SK-N-SH (cell line): ENCODE measurements at regions of chr21 and their contacts with region 1.

Region 1: GRCh38 chr21:36113647-36114428 is 21.0 kb upstream of the CBR3 start:
- DNase-seq: no peak
- H3K4me3 ChIP-seq: no peak overlapping the region
- H3K27ac ChIP-seq: no peak overlapping the region
- H3K4me1 ChIP-seq: peaks cover 0 to 5% of the 10 kb centered on the region in 2 experiments; a peak in 1 of 4 replicates
- H3K27me3 ChIP-seq: no peaks in the 10 kb centered on the region
- CTCF ChIP-seq: no peak
- EP300 ChIP-seq: no peak
- RAD21 ChIP-seq: no peak

Region 2: DNA sequence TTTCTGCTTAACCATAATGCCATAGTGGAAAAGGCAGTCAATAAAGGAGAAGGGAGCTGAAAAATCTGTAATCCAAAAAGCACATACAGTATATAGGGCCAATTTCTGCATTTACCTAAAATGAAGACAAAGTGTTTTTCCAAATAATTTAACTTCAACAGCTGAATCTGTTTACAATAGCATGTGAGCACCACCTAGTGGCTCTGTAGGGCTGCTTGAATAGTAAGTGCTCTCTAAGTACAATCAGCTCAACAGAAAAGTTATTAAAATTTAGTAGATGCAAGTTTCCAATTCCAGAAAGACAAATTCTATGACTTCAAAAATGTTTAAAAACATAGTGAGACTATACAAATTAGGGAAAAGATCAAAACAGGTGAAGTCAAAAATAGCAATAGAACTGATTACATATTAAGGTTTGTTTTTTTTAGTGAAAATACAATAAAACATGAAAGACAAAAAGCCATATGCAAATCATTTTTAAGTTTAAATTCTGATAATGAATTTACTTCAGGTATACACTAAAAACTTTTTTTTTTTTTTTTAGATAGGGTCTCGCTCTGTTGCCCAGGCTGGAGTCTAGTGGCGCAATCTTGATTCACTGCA is 273.5 kb before region 1 on chr21:
- CTCF ChIA-PET with region 1: interaction called, 10 read pairs
- POLR2A ChIA-PET with region 1: no interaction called
- DNase-seq: peak; percentile 38
- H3K4me3 ChIP-seq: no peak overlapping the region
- H3K27ac ChIP-seq: no peak overlapping the region
- H3K4me1 ChIP-seq: no peaks in the 10 kb centered on the region
- H3K27me3 ChIP-seq: no peaks in the 10 kb centered on the region
- CTCF ChIP-seq: peak; percentile 98
- EP300 ChIP-seq: no peak
- RAD21 ChIP-seq: peak; percentile 91

Region 3: GRCh38 chr21:36028127-36029069 is 85.4 kb before region 1 on chr21:
- CTCF ChIA-PET with region 1: interaction called, 41 read pairs
- POLR2A ChIA-PET with region 1: no interaction called
- DNase-seq: peak; percentile 83
- H3K4me3 ChIP-seq: no peak overlapping the region; a peak in 1 of 4 replicates
- H3K27ac ChIP-seq: no peak overlapping the region
- H3K4me1 ChIP-seq: peaks cover 0 to 4% of the 10 kb centered on the region in 2 experiments; a peak in 1 of 4 replicates
- H3K27me3 ChIP-seq: no peaks in the 10 kb centered on the region
- CTCF ChIP-seq: peak; percentile 93
- EP300 ChIP-seq: no peak
- RAD21 ChIP-seq: peak; percentile 98

Region 4: GRCh38 chr21:36035381-36035791 is 78.5 kb before region 1 on chr21:
- CTCF ChIA-PET with region 1: interaction called, 41 read pairs
- POLR2A ChIA-PET with region 1: interaction called, 3 read pairs
- DNase-seq: peak; percentile 90
- H3K4me3 ChIP-seq: no peak overlapping the region
- H3K27ac ChIP-seq: peak overlapping the region in 1 of 2 experiments; percentile 94; a peak in 2 of 4 replicates
- H3K4me1 ChIP-seq: peaks cover 0 to 25% of the 10 kb centered on the region in 2 experiments; a peak in 2 of 4 replicates
- H3K27me3 ChIP-seq: no peaks in the 10 kb centered on the region
- CTCF ChIP-seq: 0 out of 2 replicates have a peak, but pooled peaks have one; percentile 9
- EP300 ChIP-seq: peak in 1 of 2 experiments; percentile 92; a peak in 2 of 4 replicates
- RAD21 ChIP-seq: peak; percentile 44

Region 5: DNA sequence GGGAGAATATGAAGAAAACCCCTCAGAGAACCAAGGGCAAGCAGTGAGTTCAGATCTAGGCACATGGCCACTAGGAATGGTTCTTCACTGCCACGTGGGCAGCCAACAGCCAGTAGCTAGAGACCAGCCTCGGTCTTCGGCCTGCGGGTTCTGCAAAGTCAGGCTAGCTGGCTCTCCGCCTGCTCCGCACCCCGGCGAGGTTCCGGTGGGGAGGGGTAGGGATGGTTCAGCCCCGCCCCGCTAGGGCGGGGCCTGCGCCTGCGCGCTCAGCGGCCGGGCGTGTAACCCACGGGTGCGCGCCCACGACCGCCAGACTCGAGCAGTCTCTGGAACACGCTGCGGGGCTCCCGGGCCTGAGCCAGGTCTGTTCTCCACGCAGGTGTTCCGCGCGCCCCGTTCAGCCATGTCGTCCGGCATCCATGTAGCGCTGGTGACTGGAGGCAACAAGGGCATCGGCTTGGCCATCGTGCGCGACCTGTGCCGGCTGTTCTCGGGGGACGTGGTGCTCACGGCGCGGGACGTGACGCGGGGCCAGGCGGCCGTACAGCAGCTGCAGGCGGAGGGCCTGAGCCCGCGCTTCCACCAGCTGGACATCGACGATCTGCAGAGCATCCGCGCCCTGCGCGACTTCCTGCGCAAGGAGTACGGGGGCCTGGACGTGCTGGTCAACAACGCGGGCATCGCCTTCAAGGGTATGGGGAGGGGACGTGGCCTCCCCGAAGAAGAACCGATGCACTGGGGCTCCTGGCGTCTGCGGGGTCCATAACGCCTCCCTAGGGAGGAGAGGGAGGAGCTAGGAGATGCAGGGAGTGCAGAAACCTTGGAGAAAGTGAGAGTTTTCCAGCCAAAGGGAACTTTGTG is 43.9 kb before region 1 on chr21 and contains the start of gene CBR1:
- CTCF ChIA-PET with region 1: interaction called, 16 read pairs
- POLR2A ChIA-PET with region 1: no interaction called
- DNase-seq: peak; percentile 94
- H3K4me3 ChIP-seq: peak within 1 kb of the TSS; percentile 79 to 95
- H3K27ac ChIP-seq: peak within 1 kb of the TSS; percentile 59 to 87
- H3K4me1 ChIP-seq: peaks cover 5 to 19% of the 10 kb centered on the region in 2 experiments; a peak in 3 of 4 replicates
- H3K27me3 ChIP-seq: no peaks in the 10 kb centered on the region
- CTCF ChIP-seq: no peak
- EP300 ChIP-seq: no peak
- RAD21 ChIP-seq: no peak
- polyA plus RNA-seq, gene CBR1: 125 and 136 TPM in 2 replicates

Region 6: DNA sequence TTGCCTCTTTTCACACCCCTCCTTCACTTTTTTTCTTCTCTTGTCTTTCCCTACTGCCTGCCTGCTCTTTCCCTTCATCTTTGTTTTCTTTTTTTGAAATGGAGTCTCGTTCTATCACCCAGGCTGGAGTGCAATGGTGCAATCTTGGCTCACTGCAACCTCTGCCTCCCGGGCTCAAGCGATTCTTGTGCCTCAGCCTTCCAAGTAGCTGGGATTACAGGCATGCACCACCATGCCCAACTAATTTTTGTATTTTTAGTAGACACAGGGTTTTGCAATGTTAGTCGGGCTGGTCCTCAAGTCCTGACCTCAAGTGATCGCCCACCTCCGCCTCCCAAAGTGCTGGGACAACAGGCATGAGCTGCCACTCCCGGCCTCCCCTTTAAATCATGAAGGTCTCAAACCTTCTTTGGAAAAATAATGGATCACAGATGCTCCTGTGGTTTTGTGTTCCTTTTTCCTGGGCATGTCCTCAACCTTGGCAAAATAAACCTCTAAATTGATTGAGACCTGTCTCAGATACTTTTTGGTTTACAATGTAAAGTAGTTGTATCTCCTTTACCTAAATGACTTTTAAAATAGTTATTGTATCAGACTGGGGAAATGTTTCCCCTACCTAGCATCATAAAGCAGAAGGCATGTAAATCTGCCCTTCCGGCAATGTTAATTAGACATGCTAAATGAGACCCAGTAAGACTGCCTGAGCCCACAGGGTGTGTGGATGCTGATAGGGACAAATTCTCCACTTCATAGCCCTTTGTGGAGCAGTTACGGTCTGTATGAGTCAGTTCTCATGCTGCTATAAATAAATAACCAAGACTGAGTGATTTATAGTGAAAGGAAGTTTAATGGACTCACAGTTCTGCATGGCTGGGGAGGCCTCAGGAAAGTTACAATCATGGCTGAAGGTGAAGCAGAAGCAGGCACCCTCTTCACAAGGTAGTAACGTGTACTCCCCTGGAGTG is 16.3 kb before region 1 on chr21:
- CTCF ChIA-PET with region 1: interaction called, 14 read pairs
- POLR2A ChIA-PET with region 1: no interaction called
- DNase-seq: no peak
- H3K4me3 ChIP-seq: no peak overlapping the region
- H3K27ac ChIP-seq: no peak overlapping the region
- H3K4me1 ChIP-seq: no peaks in the 10 kb centered on the region
- H3K27me3 ChIP-seq: no peaks in the 10 kb centered on the region
- CTCF ChIP-seq: no peak
- EP300 ChIP-seq: no peak
- RAD21 ChIP-seq: no peak

Region 7: DNA sequence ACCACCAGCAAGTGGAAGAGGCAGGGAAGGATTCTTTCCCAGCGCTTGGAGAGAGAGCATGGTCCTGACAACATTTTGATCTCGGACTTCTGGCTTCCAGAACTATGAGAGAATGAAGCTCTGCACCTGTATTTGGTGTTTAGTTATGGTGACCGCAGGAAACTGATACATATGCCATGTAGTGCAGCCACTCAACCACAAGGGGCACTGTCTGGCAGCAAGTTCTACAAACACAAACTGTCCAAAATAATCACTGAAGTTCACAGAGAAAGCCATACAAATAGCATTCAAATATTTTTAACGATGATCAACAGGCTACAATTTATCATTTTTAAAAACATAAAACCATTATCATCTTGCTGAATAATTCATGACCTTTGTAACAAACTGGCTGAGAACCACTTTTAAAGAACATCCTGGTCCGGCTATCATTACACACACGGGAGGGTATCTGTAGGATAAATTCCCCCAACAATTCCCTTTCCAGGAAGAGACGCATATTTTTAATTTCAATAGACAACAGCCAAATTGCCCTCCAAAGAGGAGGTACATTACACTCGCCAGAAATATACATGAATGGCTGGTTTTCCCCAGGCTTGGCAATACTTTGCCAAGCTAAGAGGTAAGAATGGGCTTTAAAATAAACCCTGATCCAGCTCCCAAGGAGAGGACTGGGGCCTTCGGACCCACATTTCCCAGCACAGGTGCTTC is 11.8 kb after region 1 on chr21:
- CTCF ChIA-PET with region 1: interaction called, 56 read pairs
- POLR2A ChIA-PET with region 1: no interaction called
- DNase-seq: peak; percentile 60
- H3K4me3 ChIP-seq: no peak overlapping the region; a peak in 1 of 4 replicates
- H3K27ac ChIP-seq: no peak overlapping the region
- H3K4me1 ChIP-seq: no peaks in the 10 kb centered on the region
- H3K27me3 ChIP-seq: no peaks in the 10 kb centered on the region
- CTCF ChIP-seq: peak; percentile 94
- EP300 ChIP-seq: no peak
- RAD21 ChIP-seq: peak; percentile 60